Activated naive CD4-positive, alpha-beta T cell treated with anti-CD3 and anti-CD28 coated beads for 36 hours (primary cell): ENCODE measurements at regions of chr15 and their contacts with region 1.

Region 1: DNA sequence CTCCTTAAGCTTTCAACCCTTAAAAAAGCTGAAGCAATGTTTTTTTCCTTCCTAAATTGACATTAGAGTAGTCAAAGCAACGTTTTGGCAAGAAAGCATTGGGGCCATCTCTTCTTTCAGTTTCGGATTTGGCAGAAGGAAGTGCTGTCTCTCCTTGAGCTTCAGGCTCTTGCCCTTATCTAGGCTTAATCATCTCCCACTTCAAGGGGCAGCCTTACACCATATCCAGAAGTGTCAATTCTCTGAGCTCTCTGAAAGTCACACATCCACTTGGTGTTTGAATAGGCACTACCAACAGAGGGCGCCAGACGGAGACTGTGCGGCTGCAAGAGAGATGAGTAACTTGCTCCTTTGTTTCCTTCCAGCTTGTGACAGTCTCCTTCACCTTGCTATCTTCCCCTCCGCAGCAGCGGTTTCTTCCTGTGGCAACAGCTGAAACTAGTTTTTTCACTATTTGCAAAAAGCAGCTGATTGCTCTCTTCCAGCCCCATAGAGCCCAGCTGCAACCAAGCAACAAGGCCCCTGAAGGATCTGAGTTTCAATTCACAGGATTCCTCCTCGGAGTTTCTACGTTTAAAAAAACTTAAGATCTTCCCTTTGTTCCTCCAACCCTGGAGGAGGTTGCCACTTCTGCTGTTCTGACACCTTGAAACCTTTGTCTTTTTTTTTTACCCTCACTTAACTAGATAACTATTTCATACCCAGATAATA is 147.0 kb upstream of the SLCO3A1 start:
- DNase-seq: peak; percentile 97
- H3K4me3 Mint-ChIP-seq: no peak overlapping the region
- H3K27ac Mint-ChIP-seq: no peak overlapping the region
- H3K4me1 Mint-ChIP-seq: peaks cover 17% of the 10 kb centered on the region
- H3K27me3 Mint-ChIP-seq: peaks cover 5% of the 10 kb centered on the region

Region 2: DNA sequence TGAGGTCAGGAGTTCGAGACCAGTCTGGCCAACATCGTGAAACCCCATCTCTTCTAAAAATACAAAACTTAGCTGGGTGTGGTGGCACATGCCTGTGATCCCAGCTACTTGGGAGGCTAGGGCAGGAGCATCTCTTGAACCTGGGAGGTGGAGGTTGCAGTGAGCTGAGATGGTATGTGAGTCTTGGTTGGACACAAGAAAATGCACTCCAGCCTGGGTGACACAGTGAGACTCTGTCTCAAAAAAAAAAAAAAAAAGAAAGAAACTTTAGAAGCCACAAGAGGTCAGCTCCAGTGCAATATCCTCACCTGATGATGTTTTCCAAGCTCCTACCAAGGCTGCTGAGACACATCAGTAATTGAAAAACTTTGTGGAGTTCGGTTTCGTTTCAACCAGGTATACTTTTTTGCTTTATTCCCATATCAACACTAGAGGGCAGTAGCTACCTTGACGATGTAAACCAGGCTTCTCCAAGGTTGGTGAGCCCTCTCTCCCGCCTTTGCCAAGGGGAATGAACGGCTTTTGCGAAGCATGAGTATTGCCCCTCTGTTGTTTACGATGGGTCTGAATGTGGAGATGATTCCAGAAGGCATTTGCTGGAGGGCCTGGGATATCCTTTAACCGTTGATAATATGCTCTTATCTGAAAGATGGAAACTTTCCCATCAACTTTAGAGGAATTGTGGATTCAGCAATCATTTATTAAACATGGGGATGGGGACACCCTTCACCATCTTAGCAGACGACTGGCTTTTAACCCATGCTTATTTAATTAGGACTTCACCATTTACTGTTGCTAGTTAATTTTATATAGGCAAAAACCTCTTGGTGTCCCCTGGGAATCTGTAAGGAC is 403.7 kb before region 1 on chr15:
- CTCF ChIA-PET with region 1: interaction called, 18 read pairs
- intact Hi-C with region 1: loop called (anchors 1 kb)
- DNase-seq: peak; percentile 29
- H3K4me3 Mint-ChIP-seq: no peak overlapping the region
- H3K27ac Mint-ChIP-seq: no peak overlapping the region
- H3K4me1 Mint-ChIP-seq: peaks cover 31% of the 10 kb centered on the region
- H3K27me3 Mint-ChIP-seq: no peaks in the 10 kb centered on the region

Region 3: GRCh38 chr15:91679429-91679828 is 27.0 kb before region 1 on chr15:
- CTCF ChIA-PET with region 1: interaction called, 10 read pairs
- intact Hi-C with region 1: no loop called
- DNase-seq: no peak
- H3K4me3 Mint-ChIP-seq: no peak overlapping the region
- H3K27ac Mint-ChIP-seq: no peak overlapping the region
- H3K4me1 Mint-ChIP-seq: no peaks in the 10 kb centered on the region
- H3K27me3 Mint-ChIP-seq: peaks cover 24% of the 10 kb centered on the region

Region 4: GRCh38 chr15:91942676-91943576 is 236.4 kb after region 1 on chr15:
- CTCF ChIA-PET with region 1: interaction called, 9 read pairs
- intact Hi-C with region 1: loop called (anchors 1 kb)
- DNase-seq: peak; percentile 64
- H3K4me3 Mint-ChIP-seq: no peak overlapping the region
- H3K27ac Mint-ChIP-seq: no peak overlapping the region
- H3K4me1 Mint-ChIP-seq: peaks cover 37% of the 10 kb centered on the region
- H3K27me3 Mint-ChIP-seq: no peaks in the 10 kb centered on the region

Region 5: GRCh38 chr15:92077353-92078085 is 371.0 kb after region 1 on chr15:
- CTCF ChIA-PET with region 1: interaction called, 40 read pairs
- intact Hi-C with region 1: loop called (anchors 1 kb)
- DNase-seq: peak; percentile 90
- H3K4me3 Mint-ChIP-seq: no peak overlapping the region
- H3K27ac Mint-ChIP-seq: no peak overlapping the region
- H3K4me1 Mint-ChIP-seq: peaks cover 27% of the 10 kb centered on the region
- H3K27me3 Mint-ChIP-seq: no peaks in the 10 kb centered on the region